Vagina (tissue), 2 donors: ENCODE measurements at regions of chr1 and their contacts with region 1.

Region 1: DNA sequence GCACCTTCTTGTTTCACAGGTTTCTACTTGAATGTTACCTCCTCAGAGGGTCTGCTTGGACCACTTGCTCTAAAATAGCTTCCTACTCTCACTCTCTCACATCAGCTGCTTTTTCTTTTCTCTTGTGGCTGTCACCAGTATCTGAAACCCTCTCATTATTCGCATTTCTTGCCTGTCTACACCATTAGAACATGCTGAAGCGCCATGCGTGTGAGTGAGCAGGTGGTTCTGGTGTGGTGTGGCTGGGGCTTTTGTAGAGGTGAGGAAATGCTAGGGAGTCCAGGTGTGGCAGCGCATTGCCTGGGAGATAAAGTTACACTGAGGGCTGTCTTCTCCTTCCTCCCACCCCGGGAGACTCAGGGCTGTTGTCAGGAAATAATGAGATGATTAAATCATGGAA is 4.1 kb downstream of the ZNF362 start:
- DNase-seq: no peak
- H3K4me3 ChIP-seq: no peak overlapping the region
- H3K27ac ChIP-seq: no peak overlapping the region
- H3K4me1 ChIP-seq: peaks cover 76% of the 10 kb centered on the region
- H3K27me3 ChIP-seq: no peaks in the 10 kb centered on the region
- CTCF ChIP-seq: no peak
- POLR2A ChIP-seq: no peak

Region 2: DNA sequence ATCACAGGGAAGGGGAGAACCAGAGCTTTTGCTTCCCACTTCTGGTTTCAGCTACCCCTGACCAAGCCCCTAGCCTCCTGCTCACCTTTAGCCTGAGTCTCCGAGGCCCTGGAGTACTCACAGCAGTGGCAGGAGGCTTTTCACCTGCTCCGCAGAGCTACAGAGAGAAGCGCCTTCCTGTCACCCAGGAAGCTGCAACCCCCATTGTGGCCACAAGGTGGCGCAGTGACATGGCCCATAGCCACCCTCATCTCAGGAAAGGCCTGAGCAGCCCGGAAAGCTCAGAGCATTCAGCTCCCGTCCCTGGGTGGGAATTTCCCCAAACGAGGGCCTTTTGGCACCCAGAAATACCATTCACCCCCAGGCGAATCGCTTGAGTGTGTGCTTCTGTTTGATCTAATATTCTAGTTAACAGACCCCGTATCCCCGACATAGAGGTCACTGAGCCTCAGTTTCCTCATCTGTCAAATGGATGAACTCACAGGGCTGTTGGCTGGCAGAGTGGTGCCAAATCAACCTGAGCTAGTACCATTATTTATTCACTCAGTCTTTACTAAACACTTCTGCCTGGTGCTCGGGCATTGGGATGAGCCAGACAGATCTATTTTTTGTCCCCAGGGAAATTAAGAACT is 35.1 kb after region 1 on chr1:
- intact Hi-C with region 1: no loop called
- DNase-seq: no peak
- H3K4me3 ChIP-seq: no peak overlapping the region
- H3K27ac ChIP-seq: peak overlapping the region; percentile 43
- H3K4me1 ChIP-seq: peaks cover 30% of the 10 kb centered on the region
- H3K27me3 ChIP-seq: no peaks in the 10 kb centered on the region
- CTCF ChIP-seq: peak; percentile 98
- POLR2A ChIP-seq: no peak

Region 3: GRCh38 chr1:34711485-34711884 is 1451.0 kb after region 1 on chr1:
- intact Hi-C with region 1: loop called (anchors 5 kb)
- DNase-seq: no peak
- H3K4me3 ChIP-seq: no peak overlapping the region
- H3K27ac ChIP-seq: no peak overlapping the region
- H3K4me1 ChIP-seq: no peaks in the 10 kb centered on the region
- H3K27me3 ChIP-seq: no peaks in the 10 kb centered on the region
- CTCF ChIP-seq: no peak
- POLR2A ChIP-seq: no peak